ENCODE measurements at regions of chr16 and their contacts with region 1.

Region 1: DNA sequence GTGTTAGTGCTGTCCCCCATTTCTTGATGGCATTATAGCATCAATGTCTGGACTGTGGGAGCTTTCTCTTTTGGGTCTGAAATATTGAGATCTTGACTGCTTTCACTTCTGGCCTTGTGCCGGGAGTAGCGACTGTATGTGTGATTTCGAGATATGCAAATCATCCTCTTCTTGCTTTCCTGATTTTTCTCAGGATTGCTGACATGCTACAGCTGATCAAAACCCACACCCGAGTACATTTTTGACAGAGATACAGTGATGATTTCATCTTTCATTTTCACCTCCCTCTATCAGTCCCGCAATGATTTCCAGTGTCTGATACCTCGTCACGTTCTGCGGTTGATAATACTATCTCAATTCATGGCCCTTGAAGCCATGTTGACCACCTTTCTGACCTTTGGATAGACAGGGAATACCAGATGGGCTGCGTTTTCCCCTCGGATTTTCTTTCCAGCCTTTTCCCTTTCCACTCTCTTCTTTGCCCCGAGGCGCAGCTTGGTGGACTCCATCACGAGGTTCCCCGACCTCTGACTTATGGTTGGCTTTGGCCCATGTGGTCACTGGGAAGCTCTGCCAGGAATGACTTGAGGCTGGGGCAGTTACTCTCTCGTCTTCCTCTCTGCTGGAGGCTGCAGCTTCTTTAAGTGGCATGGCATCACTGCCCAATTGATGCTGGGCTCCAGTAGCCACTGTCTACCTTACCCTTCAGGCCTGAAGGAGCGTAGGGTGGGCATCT is 184.4 kb downstream of the SNX29 start:
- DNase-seq: no peak
- H3K4me3 Mint-ChIP-seq: no peak overlapping the region
- H3K27ac Mint-ChIP-seq: no peak overlapping the region
- H3K4me1 Mint-ChIP-seq: peaks cover 2% of the 10 kb centered on the region
- H3K27me3 Mint-ChIP-seq: no peaks in the 10 kb centered on the region

Region 2: GRCh38 chr16:12113523-12114345 is 47.2 kb before region 1 on chr16:
- intact Hi-C with region 1: loop called (anchors 2 kb)
- DNase-seq: no peak
- H3K4me3 Mint-ChIP-seq: no peak overlapping the region
- H3K27ac Mint-ChIP-seq: no peak overlapping the region
- H3K4me1 Mint-ChIP-seq: no peaks in the 10 kb centered on the region
- H3K27me3 Mint-ChIP-seq: no peaks in the 10 kb centered on the region

Measured in activated CD4-positive, alpha-beta T cell treated with anti-CD3 and anti-CD28 coated beads, Interleukin-2, amount 10 ng/mL, durations not matched to agents 24 days and 14 days (primary cell).